ENCODE measurements at regions of chr4 and their contacts with region 1.

Region 1: GRCh38 chr4:80125252-80126177 is 52.5 kb upstream of the ANTXR2 start:
- DNase-seq: peak; percentile 68
- ATAC-seq: peak; percentile 89
- H3K4me3 Mint-ChIP-seq: peak overlapping the region; percentile 48
- H3K27ac Mint-ChIP-seq: peak overlapping the region; percentile 83
- H3K4me1 Mint-ChIP-seq: peaks cover 58% of the 10 kb centered on the region
- H3K27me3 Mint-ChIP-seq: no peaks in the 10 kb centered on the region

Region 2: DNA sequence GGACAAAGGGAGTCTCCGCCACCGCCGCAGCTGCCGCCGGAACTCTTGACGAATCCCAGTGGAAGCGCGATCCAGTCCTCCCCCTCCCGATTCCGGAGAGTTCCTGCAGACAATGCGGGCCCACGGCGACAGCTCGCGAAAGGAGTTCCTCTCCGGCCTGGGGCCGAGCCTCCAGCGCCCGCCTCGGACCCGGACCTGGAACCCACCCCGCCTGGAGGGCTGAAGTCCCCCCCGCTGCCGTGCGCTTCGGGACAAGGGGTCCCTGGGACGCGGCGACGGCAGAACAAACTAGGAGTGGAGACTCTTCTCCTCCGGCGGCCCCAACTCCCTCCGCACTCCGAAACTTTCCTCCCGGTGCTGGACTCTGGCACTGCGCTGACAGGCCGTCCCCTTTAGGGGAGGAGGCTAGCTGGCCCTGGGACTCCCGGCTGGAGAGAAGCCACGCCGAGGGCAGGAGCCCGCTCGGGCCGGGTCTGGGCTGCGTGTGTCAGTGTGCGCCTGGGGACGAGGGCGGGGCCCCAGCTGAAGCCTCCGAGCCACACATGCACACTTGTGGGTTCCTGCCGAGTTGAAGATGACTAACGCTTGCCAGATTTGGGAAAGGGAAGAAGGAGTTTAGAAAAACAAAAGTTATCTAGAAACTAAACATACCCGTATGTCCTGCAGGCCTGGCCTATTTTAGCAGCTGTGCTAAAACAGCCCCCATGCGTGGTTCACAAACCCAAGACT is 52.6 kb before region 1 on chr4 and contains the start of gene ANTXR2:
- CTCF ChIA-PET with region 1: interaction called, 15 read pairs
- POLR2A ChIA-PET with region 1: interaction called, 14 read pairs
- DNase-seq: peak; percentile 75
- ATAC-seq: peak; percentile 89
- H3K4me3 Mint-ChIP-seq: peak within 1 kb of the TSS; percentile 95
- H3K27ac Mint-ChIP-seq: peak within 1 kb of the TSS; percentile 88
- H3K4me1 Mint-ChIP-seq: peaks cover 59% of the 10 kb centered on the region
- H3K27me3 Mint-ChIP-seq: peaks cover 2% of the 10 kb centered on the region
- total RNA-seq, gene ANTXR2: 15.0 to 18.0 TPM

Region 3: DNA sequence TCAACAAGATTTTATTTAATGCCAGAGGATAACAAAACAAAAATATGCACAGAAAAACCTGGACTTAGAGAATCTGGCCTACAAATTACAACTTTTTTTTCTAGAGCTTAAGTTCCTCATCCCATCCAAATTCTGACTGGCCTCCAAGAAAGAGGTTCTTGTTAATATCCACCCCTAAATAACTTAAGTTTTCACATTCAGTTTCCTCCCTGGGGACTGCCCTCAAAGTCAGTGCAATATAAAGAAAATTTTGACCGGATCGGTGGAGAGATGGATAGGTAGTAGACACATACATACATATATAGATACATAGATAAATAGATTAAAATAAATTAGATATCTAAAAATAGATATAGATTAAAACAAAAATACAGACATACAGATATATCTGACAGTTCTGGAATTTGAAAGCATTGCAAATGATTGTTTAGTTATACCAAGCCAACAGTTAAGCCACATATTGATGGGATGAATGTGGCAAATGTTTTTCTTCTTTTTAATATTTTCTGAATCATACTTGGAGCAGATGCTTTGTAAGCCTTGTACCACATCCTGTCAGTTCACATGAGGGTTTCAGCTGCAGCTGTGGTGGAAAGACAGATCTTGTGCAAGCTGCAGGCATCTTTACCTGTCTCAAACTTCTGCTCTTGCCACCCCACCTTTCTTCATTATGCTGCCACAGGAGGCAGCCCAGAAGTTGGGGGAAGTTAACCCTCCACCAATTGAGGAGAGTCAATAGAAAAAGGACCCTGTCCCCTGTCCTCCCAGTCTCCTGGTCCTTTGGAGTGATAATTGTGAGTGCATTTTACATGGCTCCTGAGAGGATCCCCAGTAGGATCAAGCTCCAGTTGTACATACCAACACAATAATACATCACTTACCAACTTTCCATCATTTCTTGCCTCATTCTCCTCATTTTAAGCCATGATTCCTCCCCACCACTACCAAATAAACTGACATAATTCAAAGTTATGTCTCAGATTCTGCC is 13.3 kb after region 1 on chr4:
- CTCF ChIA-PET with region 1: interaction called, 89 read pairs
- POLR2A ChIA-PET with region 1: interaction called, 11 read pairs
- DNase-seq: peak; percentile 78
- ATAC-seq: peak; percentile 95
- H3K4me3 Mint-ChIP-seq: peak overlapping the region; percentile 6
- H3K27ac Mint-ChIP-seq: peak overlapping the region; percentile 81
- H3K4me1 Mint-ChIP-seq: peaks cover 52% of the 10 kb centered on the region
- H3K27me3 Mint-ChIP-seq: no peaks in the 10 kb centered on the region

Region 4: DNA sequence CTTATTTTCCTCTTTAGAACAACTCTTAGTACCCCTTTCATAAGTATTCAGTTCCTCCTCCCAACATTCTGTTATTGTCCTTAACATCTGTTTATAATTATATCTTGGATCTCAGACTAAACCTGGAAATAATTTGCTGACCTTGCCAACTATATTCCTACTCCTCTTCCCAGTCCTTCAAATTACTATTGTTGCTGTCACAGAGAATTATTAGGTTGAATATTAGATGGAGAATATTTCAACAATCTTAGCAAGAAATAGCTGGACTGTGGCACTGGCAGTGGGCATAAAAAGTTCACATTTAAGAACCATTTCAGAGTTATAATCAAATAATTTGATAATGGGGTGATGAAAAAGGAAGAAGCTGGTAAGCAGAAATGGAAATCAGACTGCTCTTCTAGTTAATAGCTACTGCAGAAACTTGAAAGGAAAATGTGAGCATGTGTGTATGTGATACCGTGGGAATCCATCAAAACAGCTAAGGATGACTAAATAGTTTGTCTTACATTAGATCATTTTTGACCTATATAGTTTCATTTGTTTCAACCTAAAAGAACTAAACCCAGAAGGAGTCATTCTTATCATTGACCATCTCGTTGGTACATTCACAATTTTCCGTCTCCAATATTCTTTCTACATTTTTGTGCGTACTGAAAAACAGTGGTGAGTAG is 28.5 kb after region 1 on chr4:
- CTCF ChIA-PET with region 1: interaction called, 26 read pairs
- POLR2A ChIA-PET with region 1: no interaction called
- DNase-seq: no peak
- ATAC-seq: peak; percentile 27
- H3K4me3 Mint-ChIP-seq: no peak overlapping the region
- H3K27ac Mint-ChIP-seq: no peak overlapping the region
- H3K4me1 Mint-ChIP-seq: no peaks in the 10 kb centered on the region
- H3K27me3 Mint-ChIP-seq: no peaks in the 10 kb centered on the region

Region 5: GRCh38 chr4:80173401-80173800 is 47.9 kb after region 1 on chr4:
- CTCF ChIA-PET with region 1: interaction called, 239 read pairs
- POLR2A ChIA-PET with region 1: interaction called, 14 read pairs
- DNase-seq: peak; percentile 73
- ATAC-seq: peak; percentile 94
- H3K4me3 Mint-ChIP-seq: peak overlapping the region; percentile 56
- H3K27ac Mint-ChIP-seq: peak overlapping the region; percentile 85
- H3K4me1 Mint-ChIP-seq: peaks cover 50% of the 10 kb centered on the region
- H3K27me3 Mint-ChIP-seq: no peaks in the 10 kb centered on the region

Region 6: GRCh38 chr4:80202190-80202711 is 76.7 kb after region 1 on chr4:
- CTCF ChIA-PET with region 1: interaction called, 45 read pairs
- POLR2A ChIA-PET with region 1: interaction called, 11 read pairs
- DNase-seq: peak; percentile 78
- ATAC-seq: peak; percentile 77
- H3K4me3 Mint-ChIP-seq: peak overlapping the region; percentile 71
- H3K27ac Mint-ChIP-seq: peak overlapping the region; percentile 54
- H3K4me1 Mint-ChIP-seq: peaks cover 24% of the 10 kb centered on the region
- H3K27me3 Mint-ChIP-seq: peaks cover 29% of the 10 kb centered on the region

Measured in activated CD8-positive, alpha-beta T cell treated with anti-CD3 and anti-CD28 coated beads, Interleukin-2, amount 10 ng/mL, durations not matched to agents 7 days and 5 days (primary cell).